CD14-positive monocyte (primary cell): ENCODE measurements at regions of chr3 and their contacts with region 1.

Region 1: GRCh38 chr3:46488735-46489361 is 8.9 kb upstream of the RTP3 start:
- DNase-seq: peak; percentile 76 to 83 (median 76)
- H3K4me3 ChIP-seq: peak overlapping the region in 1 of 3 experiments; percentile 62
- H3K4me3 Mint-ChIP-seq: peak overlapping the region; percentile 56 to 81
- H3K27ac ChIP-seq: no peak overlapping the region
- H3K27ac Mint-ChIP-seq: peak overlapping the region in 1 of 7 donors; percentile 4
- H3K4me1 ChIP-seq: peaks cover 3 to 8% of the 10 kb centered on the region in 2 donors
- H3K4me1 Mint-ChIP-seq: peaks cover 7% of the 10 kb centered on the region
- H3K27me3 ChIP-seq: no peaks in the 10 kb centered on the region
- H3K27me3 Mint-ChIP-seq: peaks cover 0 to 6% (median 2%) of the 10 kb centered on the region in 3 donors
- CTCF ChIP-seq: peak; percentile 99

Region 2: DNA sequence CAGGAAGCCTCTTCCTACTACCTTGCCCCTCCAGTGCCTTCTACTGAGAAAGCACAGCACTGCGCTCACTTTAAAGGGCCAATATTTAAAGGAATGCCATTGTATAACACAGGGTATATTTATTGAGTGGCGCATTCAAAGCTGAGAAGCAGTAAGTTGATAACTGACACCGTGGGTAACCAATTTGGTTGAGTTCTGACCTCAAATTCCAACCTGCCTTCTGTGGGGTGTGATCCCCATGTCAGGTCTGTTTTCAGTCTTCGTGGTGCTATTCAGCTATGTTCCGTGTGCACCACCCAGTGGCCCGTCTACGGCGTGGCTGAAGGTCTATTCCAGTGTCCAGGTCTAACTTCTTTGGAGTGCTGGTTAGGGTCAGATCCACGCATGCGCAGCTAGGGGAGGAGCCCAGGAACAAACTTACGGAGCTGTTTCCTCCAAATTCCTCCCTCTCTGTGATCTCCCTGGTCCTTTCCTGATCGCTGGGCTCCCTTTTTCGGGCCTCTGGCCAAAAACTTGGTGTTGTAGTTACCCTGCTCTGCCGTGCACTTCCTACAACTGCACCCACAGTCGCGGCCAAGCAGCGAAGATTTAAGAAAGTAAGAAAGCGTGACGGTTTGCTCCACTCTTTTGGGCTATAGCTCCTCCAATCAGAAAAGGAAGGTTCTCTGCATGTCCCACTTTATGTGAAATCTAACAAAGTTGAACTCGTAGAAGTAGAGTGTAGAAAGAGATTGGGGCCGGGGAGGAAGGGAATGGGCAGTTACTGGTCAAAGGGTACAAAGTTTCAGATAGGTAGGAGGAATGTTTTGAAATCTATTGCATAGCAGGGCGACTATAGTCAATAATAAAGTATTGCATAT is 69.6 kb after region 1 on chr3:
- intact Hi-C with region 1: loop called (anchors 2 to 10 kb)
- DNase-seq: peak; percentile 76 to 85 (median 78)
- H3K4me3 ChIP-seq: peak overlapping the region; percentile 28 to 75 (median 41)
- H3K4me3 Mint-ChIP-seq: peak overlapping the region; percentile 76 to 93
- H3K27ac ChIP-seq: peak overlapping the region in 1 of 2 donors; percentile 49
- H3K27ac Mint-ChIP-seq: peak overlapping the region in 4 of 7 donors; percentile 38 to 77 (median 71)
- H3K4me1 ChIP-seq: peaks cover 4 to 7% of the 10 kb centered on the region in 2 donors
- H3K4me1 Mint-ChIP-seq: peaks cover 11% of the 10 kb centered on the region
- H3K27me3 ChIP-seq: no peaks in the 10 kb centered on the region
- H3K27me3 Mint-ChIP-seq: peaks cover 8 to 16% (median 12%) of the 10 kb centered on the region in 3 donors
- CTCF ChIP-seq: peak; percentile 81

Region 3: GRCh38 chr3:46619845-46620778 is 131.3 kb after region 1 on chr3:
- intact Hi-C with region 1: loop called in 1 of 2 experiments (anchors 5 kb)
- DNase-seq: no peak
- H3K4me3 ChIP-seq: no peak overlapping the region
- H3K4me3 Mint-ChIP-seq: no peak overlapping the region
- H3K27ac ChIP-seq: no peak overlapping the region
- H3K27ac Mint-ChIP-seq: no peak overlapping the region
- H3K4me1 ChIP-seq: no peaks in the 10 kb centered on the region
- H3K4me1 Mint-ChIP-seq: no peaks in the 10 kb centered on the region
- H3K27me3 ChIP-seq: peaks cover 3 to 5% of the 10 kb centered on the region in 2 donors
- H3K27me3 Mint-ChIP-seq: peaks cover 14 to 39% (median 30%) of the 10 kb centered on the region in 3 donors
- CTCF ChIP-seq: no peak

Region 4: DNA sequence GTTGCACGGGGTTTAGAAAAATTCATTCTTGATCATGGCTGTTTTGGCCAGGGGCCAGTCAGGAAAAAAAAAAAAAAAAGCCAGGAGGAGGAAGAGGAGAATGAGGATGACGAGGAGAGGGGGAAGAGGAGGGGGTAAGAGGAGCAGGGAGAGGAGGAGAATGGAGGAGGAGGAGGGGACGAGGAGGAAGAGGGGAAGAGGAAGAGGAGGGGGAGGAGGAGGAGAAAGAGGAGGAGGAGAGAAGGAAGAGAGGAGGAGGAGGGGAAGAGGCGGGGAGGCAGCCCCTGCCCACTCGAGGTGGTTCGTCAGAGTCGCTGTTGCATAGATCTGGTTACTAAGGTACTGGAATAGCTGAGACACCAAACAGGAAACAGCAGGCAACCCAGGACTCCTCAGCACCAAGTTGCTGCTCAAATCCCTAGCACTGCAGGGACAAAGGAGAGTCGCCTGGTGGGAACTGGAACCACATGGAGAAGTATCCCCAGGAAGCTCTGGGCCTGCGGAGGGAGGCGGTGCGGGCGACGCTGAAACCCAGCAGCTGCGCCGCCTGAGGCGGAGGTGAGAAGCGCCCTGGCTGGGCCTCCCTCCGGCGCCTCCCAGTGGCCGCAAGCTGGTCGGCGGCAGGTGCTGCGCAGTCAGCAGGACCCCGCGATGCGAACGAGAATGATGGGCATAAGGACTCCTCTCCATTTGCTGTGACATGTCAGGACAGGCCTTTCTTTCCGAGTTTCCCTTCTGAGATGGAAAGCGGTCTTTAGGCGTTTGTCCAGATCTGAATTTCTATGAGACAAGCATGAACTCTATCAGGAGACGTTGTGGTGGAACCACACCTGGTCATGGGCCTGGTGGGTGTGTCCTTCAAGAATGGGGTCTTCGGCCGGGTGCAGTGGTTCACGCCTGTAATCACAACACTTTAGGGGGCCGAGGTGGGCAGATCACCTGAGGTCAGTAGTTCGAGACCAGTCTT is 141.0 kb after region 1 on chr3:
- intact Hi-C with region 1: loop called (anchors 2 to 10 kb)
- DNase-seq: peak; percentile 53 to 62 (median 62)
- H3K4me3 ChIP-seq: peak overlapping the region in 2 of 3 experiments; percentile 6 to 63
- H3K4me3 Mint-ChIP-seq: peak overlapping the region; percentile 27 to 84
- H3K27ac ChIP-seq: no peak overlapping the region
- H3K27ac Mint-ChIP-seq: peak overlapping the region in 1 of 7 donors; percentile 9
- H3K4me1 ChIP-seq: peaks cover 11 to 12% of the 10 kb centered on the region in 2 donors
- H3K4me1 Mint-ChIP-seq: peaks cover 19% of the 10 kb centered on the region
- H3K27me3 ChIP-seq: no peaks in the 10 kb centered on the region
- H3K27me3 Mint-ChIP-seq: peaks cover 0 to 5% (median 0%) of the 10 kb centered on the region in 3 donors
- CTCF ChIP-seq: peak; percentile 100